Lower leg skin (tissue), 4 donors: ENCODE measurements at regions of chr9 and their contacts with region 1.

Region 1: GRCh38 chr9:33721674-33722358 is 73.5 kb upstream of the PRSS3 start:
- DNase-seq: peak; percentile 76 to 95
- H3K4me3 ChIP-seq: no peak overlapping the region
- CTCF ChIP-seq: peak in 1 of 3 donors; percentile 96
- POLR2A ChIP-seq: no peak

Region 2: GRCh38 chr9:33623658-33624586 is 97.9 kb before region 1 on chr9:
- intact Hi-C with region 1: loop called (anchors 2 kb)
- DNase-seq: peak; percentile 67 to 93
- H3K4me3 ChIP-seq: no peak overlapping the region
- CTCF ChIP-seq: peak in 1 of 3 donors; percentile 88
- POLR2A ChIP-seq: no peak

Region 3: GRCh38 chr9:34126207-34127034 is 404.6 kb after region 1 on chr9 and contains the start of gene DCAF12:
- intact Hi-C with region 1: no loop called
- DNase-seq: peak; percentile 89 to 98
- H3K4me3 ChIP-seq: peak within 1 kb of the TSS; percentile 61
- CTCF ChIP-seq: no peak
- POLR2A ChIP-seq: no peak
- total RNA-seq, gene DCAF12: 21.9 to 30.7 (median 26.8) TPM